ENCODE measurements at regions of chr12 and their contacts with region 1.

Region 1: GRCh38 chr12:50074936-50075807 is 10.0 kb upstream of the SMARCD1 start:
- DNase-seq: peak; percentile 48 to 81 (median 69)
- ATAC-seq: peak; percentile 95
- H3K4me3 ChIP-seq: no peak overlapping the region
- H3K4me3 Mint-ChIP-seq: no peak overlapping the region
- H3K27ac ChIP-seq: no peak overlapping the region
- H3K27ac Mint-ChIP-seq: peak overlapping the region in 4 of 9 donors; percentile 36 to 59 (median 43)
- H3K4me1 ChIP-seq: peaks cover 0 to 4% of the 10 kb centered on the region in 2 donors
- H3K4me1 Mint-ChIP-seq: peaks cover 0 to 12% (median 7%) of the 10 kb centered on the region in 7 donors
- H3K27me3 ChIP-seq: no peaks in the 10 kb centered on the region
- H3K27me3 Mint-ChIP-seq: no peaks in the 10 kb centered on the region

Region 2: DNA sequence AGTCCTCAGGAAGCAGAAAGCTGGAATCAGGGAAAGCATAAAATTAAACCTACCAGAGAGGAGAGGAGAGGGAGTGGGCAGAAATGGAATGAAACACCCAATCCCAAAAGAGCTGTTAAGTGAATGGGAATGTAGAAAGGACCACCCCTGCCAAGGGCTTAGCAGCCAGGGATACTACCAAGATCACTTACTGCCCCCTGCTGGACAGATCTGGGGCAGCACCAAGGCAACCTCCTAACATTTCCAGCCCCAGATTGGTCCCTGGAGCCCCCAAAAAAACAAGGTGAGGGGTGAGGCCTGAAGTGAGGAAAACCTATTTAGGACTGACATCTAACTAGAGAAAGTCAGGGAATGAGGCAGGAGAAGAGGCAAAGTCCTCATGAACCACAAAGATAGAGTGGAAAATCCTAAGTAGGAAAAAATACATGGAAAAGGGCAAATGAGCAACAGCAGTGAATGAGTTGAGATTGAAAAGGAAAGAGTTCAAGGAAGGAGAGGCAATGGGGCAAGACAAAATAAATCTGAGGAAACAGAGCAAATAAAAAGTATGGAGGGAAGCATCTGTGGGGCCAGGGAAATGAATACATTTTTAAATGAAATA is 1138.7 kb before region 1 on chr12:
- CTCF ChIA-PET with region 1: no interaction called
- POLR2A ChIA-PET with region 1: no interaction called
- intact Hi-C with region 1: no loop called
- DNase-seq: peak; percentile 65 to 87 (median 77)
- ATAC-seq: peak; percentile 80
- H3K4me3 ChIP-seq: no peak overlapping the region
- H3K4me3 Mint-ChIP-seq: no peak overlapping the region
- H3K27ac ChIP-seq: no peak overlapping the region
- H3K27ac Mint-ChIP-seq: peak overlapping the region; percentile 1 to 85 (median 68)
- H3K4me1 ChIP-seq: peaks cover 6 to 34% of the 10 kb centered on the region in 2 donors
- H3K4me1 Mint-ChIP-seq: peaks cover 12 to 31% (median 16%) of the 10 kb centered on the region in 7 donors
- H3K27me3 ChIP-seq: no peaks in the 10 kb centered on the region
- H3K27me3 Mint-ChIP-seq: no peaks in the 10 kb centered on the region

Region 3: GRCh38 chr12:49265516-49265792 is 809.7 kb before region 1 on chr12:
- CTCF ChIA-PET with region 1: no interaction called
- POLR2A ChIA-PET with region 1: no interaction called
- intact Hi-C with region 1: no loop called
- DNase-seq: peak; percentile 41 to 78 (median 55)
- ATAC-seq: peak; percentile 84
- H3K4me3 ChIP-seq: peak overlapping the region; percentile 91
- H3K4me3 Mint-ChIP-seq: peak overlapping the region; percentile 88 to 99 (median 92)
- H3K27ac ChIP-seq: peak overlapping the region; percentile 68
- H3K27ac Mint-ChIP-seq: peak overlapping the region in 8 of 9 donors; percentile 85 to 99 (median 89)
- H3K4me1 ChIP-seq: peaks cover 16% of the 10 kb centered on the region in 2 donors
- H3K4me1 Mint-ChIP-seq: peaks cover 4 to 50% (median 11%) of the 10 kb centered on the region in 7 donors
- H3K27me3 ChIP-seq: no peaks in the 10 kb centered on the region
- H3K27me3 Mint-ChIP-seq: peaks cover 0 to 2% (median 0%) of the 10 kb centered on the region in 5 donors

Region 4: DNA sequence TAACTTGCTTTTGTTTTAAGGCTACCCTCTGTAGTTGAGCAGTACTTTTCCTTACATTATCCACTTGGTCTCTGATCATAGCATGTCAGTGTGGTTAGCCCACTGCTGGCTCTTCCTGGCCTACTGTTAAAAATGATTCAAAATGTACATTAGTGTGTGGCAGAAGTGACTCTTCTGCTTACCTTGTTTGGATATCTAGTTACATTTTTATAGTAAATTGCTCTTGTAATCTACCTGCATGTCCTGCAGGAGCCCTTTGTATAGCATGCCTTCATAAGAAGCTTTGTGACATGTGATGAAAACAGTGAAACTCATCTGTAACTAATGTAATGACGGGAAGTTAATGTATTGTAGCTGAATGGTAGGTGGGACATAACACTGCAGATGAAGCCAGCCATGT is 699.8 kb before region 1 on chr12:
- CTCF ChIA-PET with region 1: no interaction called
- POLR2A ChIA-PET with region 1: no interaction called
- intact Hi-C with region 1: no loop called
- DNase-seq: no peak
- ATAC-seq: no peak
- H3K4me3 ChIP-seq: no peak overlapping the region
- H3K4me3 Mint-ChIP-seq: no peak overlapping the region
- H3K27ac ChIP-seq: no peak overlapping the region
- H3K27ac Mint-ChIP-seq: peak overlapping the region in 1 of 9 donors; percentile 20
- H3K4me1 ChIP-seq: no peaks in the 10 kb centered on the region
- H3K4me1 Mint-ChIP-seq: peaks cover 0 to 21% (median 4%) of the 10 kb centered on the region in 7 donors
- H3K27me3 ChIP-seq: no peaks in the 10 kb centered on the region
- H3K27me3 Mint-ChIP-seq: no peaks in the 10 kb centered on the region

Region 5: DNA sequence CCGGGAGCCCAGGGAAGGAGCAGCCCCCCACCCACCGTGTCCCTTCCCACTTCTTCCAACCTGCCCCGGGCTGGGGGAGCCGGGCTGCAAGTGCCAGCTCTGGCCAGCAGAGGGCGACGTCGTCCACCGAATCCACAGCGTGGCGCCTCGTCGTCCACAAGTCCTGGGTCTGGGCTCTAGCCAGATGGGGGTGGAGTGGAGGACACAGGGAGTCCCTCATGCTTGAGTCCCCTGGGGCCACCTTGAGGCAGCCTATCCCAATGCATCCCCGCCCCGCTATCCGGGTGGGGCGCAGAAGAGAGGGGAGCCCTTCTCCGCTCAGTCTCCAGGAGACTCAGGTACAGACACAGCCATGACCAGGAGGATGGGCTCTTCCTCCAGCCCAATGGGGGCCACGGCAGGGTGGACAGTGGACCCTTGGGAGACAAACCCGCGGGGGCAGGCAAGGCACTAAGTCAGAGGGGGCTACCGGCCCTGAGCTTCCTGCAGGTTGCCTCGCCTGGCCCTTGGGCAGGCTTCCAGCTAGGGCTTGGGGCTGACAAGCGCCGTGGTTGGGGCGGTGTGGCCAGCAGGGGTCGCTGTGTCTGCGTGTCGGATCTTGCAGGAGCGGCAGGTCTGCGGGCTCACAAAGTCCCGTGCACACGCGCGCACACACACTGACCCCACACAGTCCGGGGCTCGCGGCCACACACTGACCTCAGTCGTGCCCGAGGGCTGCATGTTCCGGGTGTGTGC is 108.0 kb before region 1 on chr12:
- CTCF ChIA-PET with region 1: interaction called, 42 read pairs
- POLR2A ChIA-PET with region 1: no interaction called
- intact Hi-C with region 1: loop called (anchors 1 kb)
- DNase-seq: peak; percentile 81 to 98 (median 93)
- ATAC-seq: peak; percentile 93
- H3K4me3 ChIP-seq: peak overlapping the region; percentile 81
- H3K4me3 Mint-ChIP-seq: peak overlapping the region; percentile 70 to 83 (median 80)
- H3K27ac ChIP-seq: no peak overlapping the region
- H3K27ac Mint-ChIP-seq: peak overlapping the region in 1 of 9 donors; percentile 14
- H3K4me1 ChIP-seq: peaks cover 0 to 9% of the 10 kb centered on the region in 2 donors
- H3K4me1 Mint-ChIP-seq: peaks cover 0 to 12% (median 4%) of the 10 kb centered on the region in 7 donors
- H3K27me3 ChIP-seq: no peaks in the 10 kb centered on the region
- H3K27me3 Mint-ChIP-seq: peaks cover 31 to 41% (median 35%) of the 10 kb centered on the region in 5 donors

Region 6: DNA sequence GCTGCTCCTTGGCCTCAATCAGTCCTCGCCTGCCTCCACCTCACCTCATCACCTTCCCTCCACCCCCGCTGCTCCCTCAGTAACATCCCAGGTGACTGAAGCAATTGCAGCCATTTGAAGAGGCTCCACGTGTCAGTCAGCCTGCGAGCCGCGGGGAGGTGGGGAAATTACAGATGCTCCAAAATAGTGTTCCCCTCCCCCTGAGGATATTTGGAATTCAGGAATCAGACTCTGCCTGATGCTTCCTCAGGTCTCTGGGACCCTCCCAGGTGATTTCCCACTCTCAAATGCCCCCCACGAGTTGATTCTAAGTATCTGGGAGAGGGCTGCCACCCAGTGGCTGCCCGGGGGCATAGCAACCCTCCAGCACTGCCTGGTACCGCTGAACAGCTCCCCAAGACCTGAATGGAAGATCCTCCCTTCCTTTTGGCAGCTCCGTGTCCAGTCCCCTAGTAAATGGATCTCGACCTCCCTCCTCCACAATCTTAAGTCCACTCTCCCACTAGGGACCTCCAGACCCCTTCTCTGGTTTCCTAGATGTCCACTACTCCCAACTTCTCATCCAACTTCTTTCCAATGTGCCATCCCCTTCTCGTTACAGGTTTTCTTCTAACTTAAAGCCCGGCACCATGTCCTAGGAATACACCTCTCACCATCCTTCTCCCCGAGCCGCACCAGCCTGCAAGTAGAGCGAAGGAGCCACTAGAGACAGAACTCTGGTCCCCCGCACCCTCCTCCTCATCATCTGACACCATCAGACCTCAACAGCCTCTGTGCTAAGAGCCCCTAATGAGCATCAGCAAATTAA is 19.1 kb before region 1 on chr12:
- CTCF ChIA-PET with region 1: interaction called, 12 read pairs
- POLR2A ChIA-PET with region 1: no interaction called
- intact Hi-C with region 1: no loop called
- DNase-seq: peak; percentile 41 to 64 (median 56)
- ATAC-seq: peak; percentile 79
- H3K4me3 ChIP-seq: peak overlapping the region; percentile 42
- H3K4me3 Mint-ChIP-seq: peak overlapping the region; percentile 66 to 96 (median 92)
- H3K27ac ChIP-seq: no peak overlapping the region
- H3K27ac Mint-ChIP-seq: peak overlapping the region in 2 of 9 donors; percentile 46 to 57
- H3K4me1 ChIP-seq: peaks cover 7 to 31% of the 10 kb centered on the region in 2 donors
- H3K4me1 Mint-ChIP-seq: peaks cover 17 to 48% (median 41%) of the 10 kb centered on the region in 7 donors
- H3K27me3 ChIP-seq: peaks cover 0 to 9% of the 10 kb centered on the region in 2 donors
- H3K27me3 Mint-ChIP-seq: peaks cover 38 to 56% (median 48%) of the 10 kb centered on the region in 5 donors

Region 7: DNA sequence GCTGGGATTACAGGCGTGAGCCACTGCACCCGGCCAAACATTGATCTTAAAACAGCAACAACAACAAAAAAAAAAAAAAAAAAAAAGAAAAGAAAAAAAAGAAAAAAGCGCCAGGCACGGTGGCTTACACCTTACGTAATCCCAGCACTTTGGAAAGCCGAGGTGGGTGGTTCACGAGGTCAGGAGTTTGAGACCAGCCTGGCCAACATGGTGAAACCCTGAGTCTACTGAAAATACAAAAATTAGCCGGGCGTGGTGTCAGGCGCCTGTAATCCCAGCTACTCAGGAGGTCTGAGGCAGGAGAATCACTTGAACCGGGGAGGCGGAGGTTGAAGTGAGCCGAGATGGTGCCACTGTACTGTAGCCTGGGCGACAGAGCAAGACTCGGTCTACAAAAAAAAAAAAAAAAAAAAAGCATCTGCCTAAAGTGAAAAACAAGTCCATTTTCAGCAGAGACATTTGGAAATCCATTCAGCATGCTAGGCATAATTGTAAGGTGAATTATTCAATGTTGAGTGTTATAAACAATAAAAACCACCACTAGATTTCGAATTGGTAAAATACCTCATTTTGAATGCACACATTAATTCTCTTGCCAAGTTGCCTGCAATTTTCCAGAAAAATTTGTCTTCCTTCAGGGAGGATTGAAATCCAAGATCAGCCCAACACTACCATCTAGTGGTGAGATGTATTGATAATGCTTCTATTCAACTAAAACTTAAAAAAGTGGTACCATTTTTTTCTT is 100.0 kb after region 1 on chr12:
- CTCF ChIA-PET with region 1: interaction called, 19 read pairs
- POLR2A ChIA-PET with region 1: interaction called, 3 read pairs
- intact Hi-C with region 1: loop called (anchors 1 kb)
- DNase-seq: peak in 7 of 9 donors; percentile 25 to 67 (median 56)
- ATAC-seq: peak; percentile 63
- H3K4me3 ChIP-seq: no peak overlapping the region
- H3K4me3 Mint-ChIP-seq: no peak overlapping the region
- H3K27ac ChIP-seq: no peak overlapping the region
- H3K27ac Mint-ChIP-seq: peak overlapping the region in 5 of 9 donors; percentile 3 to 71 (median 32)
- H3K4me1 ChIP-seq: no peaks in the 10 kb centered on the region
- H3K4me1 Mint-ChIP-seq: peaks cover 0 to 5% (median 0%) of the 10 kb centered on the region in 7 donors
- H3K27me3 ChIP-seq: no peaks in the 10 kb centered on the region
- H3K27me3 Mint-ChIP-seq: no peaks in the 10 kb centered on the region

Measured in naive thymus-derived CD4-positive, alpha-beta T cell (primary cell).